ENCODE measurements at regions of chr11 and their contacts with region 1.

Region 1: GRCh38 chr11:73204711-73205121 is 13.4 kb upstream of the P2RY2 start:
- DNase-seq: peak in 1 of 2 donors; percentile 51
- ATAC-seq: no peak
- H3K4me3 ChIP-seq: no peak overlapping the region
- H3K27ac ChIP-seq: peak overlapping the region in 1 of 4 donors; percentile 72
- H3K4me1 ChIP-seq: peaks cover 8 to 26% of the 10 kb centered on the region in 2 donors
- H3K27me3 ChIP-seq: no peaks in the 10 kb centered on the region
- CTCF ChIP-seq: no peak
- POLR2A ChIP-seq: no peak

Region 2: DNA sequence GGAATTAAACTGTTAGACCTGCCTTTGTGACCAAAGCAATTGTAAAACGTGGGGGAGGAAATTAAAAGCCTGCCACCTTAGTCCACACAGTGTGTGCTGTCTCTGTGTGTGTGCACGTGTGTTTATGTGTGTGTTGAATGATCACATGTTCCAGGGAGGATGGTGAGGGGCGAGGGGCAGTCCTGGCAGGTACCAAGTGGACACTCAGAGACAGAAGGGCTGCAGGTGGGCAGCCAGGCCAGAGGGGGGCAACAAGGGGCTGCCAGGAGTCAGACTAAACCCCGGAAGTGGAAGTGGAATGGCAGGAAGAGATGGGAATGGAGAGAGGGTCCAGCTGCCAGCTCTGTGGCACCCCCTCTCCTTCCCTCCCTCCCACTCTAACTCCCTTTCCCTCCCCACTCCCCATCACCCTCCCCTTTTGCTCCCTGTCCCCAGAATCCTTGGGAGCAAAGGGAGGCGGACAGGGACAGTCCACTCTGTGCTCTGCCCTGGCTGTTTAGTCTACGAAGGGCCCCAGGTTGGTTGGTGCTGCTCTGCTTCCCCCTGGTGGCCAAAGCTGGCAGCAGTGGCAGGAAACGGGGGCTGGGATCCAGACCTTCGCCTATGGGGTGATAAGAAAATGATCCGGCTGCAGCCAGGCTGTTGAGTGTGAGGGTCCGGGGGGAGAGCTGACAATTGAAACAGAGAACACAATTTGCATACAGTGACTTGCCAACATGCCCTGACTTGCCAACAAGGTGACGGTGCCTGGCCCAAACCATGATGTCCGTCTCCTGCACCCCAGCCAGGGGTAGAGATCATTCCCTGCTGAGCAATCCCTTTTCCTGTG is 37.7 kb after region 1 on chr11:
- in situ Hi-C with region 1: no loop called
- intact Hi-C with region 1: loop called (anchors 5 kb)
- DNase-seq: peak; percentile 45 to 75
- ATAC-seq: peak; percentile 8 to 25
- H3K4me3 ChIP-seq: peak overlapping the region in 1 of 4 donors; percentile 12
- H3K27ac ChIP-seq: peak overlapping the region; percentile 92 to 98 (median 96)
- H3K4me1 ChIP-seq: peaks cover 44 to 52% of the 10 kb centered on the region in 2 donors
- H3K27me3 ChIP-seq: no peaks in the 10 kb centered on the region
- CTCF ChIP-seq: peak; percentile 90 to 93 (median 91)
- POLR2A ChIP-seq: no peak

Measured in gastrocnemius medialis (tissue), 4 donors.